ENCODE measurements at regions of chr17 and their contacts with region 1.

Region 1: DNA sequence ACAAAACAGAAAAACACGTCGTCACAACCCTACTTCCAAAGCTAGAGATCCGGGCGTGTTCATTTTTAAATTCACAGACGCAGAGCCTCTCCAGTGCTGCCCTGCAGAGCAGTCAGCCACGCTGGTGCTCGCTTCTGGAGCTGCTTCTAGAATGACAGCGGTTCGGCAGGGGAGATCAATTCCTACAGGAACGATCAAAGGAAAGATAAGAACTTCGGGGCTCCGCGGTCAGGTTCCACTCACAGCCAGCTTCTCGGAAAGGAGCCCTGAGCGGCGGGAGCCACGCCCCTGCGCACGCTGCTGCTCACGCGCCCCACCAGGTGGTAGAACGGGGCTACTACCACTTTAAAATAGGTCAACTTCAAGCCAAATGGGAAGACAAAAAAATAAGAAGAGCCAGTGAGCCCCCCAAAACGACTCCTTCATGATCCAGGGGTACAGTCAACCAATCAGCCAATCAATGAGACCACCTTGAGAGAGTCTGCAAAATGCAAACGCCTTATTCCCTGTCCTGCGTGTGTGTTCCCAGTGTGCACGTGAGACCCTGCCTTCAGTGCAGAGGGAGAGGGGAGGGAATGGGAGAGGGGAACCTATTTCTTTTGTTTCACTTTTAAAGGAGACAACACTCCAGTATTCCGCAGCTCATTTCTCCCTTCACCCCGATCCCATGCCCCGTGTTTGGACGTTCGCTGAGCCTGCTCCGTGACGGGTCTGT is 209.7 kb downstream of the RBFOX3 start:
- DNase-seq: peak; percentile 47 to 90
- H3K4me3 ChIP-seq: peak overlapping the region; percentile 32 to 59 (median 46); a peak in 7 of 8 replicates
- H3K27ac ChIP-seq: no peak overlapping the region
- H3K4me1 ChIP-seq: peaks cover 0 to 8% (median 5%) of the 10 kb centered on the region in 4 experiments; a peak in 6 of 7 replicates
- H3K27me3 ChIP-seq: peaks cover 0 to 24% (median 15%) of the 10 kb centered on the region in 4 experiments; a peak in 6 of 7 replicates
- CTCF ChIP-seq: peak; percentile 68 to 80 (median 70)
- EP300 ChIP-seq: no peak
- POLR2A ChIP-seq: no peak
- RAD21 ChIP-seq: peak; percentile 55 to 58

Region 2: GRCh38 chr17:79188048-79188447 is 213.1 kb before region 1 on chr17:
- CTCF ChIA-PET with region 1: interaction called, 272 read pairs
- POLR2A ChIA-PET with region 1: no interaction called
- DNase-seq: peak; percentile 38 to 89
- H3K4me3 ChIP-seq: no peak overlapping the region
- H3K27ac ChIP-seq: no peak overlapping the region
- H3K4me1 ChIP-seq: peaks cover 10 to 40% (median 26%) of the 10 kb centered on the region in 4 experiments
- H3K27me3 ChIP-seq: peaks cover 3 to 24% (median 17%) of the 10 kb centered on the region in 4 experiments
- CTCF ChIP-seq: peak; percentile 91 to 97 (median 95)
- EP300 ChIP-seq: no peak
- POLR2A ChIP-seq: no peak
- RAD21 ChIP-seq: peak; percentile 97

Region 3: DNA sequence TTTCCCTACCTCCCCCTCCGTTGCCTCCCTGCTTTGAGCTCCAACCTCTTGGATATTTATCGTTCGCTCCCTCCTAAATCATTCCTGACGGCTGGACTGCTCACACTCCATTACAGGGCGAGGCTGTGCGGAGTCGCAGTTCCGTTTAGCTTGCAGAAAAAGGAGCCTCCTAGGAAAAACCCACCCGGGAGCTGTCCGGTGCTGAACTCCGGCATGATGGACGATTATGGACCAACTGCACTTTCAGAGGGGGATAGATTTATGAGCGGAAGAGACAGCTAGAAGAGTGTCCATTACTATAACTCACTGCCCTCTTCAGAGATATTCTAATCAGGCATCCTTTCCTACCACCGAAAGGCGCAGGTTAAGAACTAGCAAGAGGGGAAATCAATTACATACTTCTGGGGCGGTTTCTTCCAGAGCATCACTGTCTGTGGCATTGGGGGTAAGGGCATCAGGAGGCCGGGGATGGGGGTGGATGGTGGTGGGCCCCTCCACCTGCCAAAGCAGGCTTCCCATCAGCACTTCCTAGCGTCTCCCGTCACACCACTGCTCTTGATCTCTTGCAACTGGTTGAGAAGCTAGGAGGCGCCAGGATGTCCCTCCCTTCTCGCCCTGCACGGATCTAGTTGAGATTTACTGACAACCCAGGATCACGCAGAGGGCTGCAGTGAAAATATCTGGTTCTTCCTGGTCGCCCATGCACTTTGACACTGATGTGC is 75.3 kb before region 1 on chr17:
- CTCF ChIA-PET with region 1: no interaction called
- POLR2A ChIA-PET with region 1: no interaction called
- DNase-seq: peak in 1 of 2 experiments; percentile 79
- H3K4me3 ChIP-seq: no peak overlapping the region
- H3K27ac ChIP-seq: no peak overlapping the region
- H3K4me1 ChIP-seq: no peaks in the 10 kb centered on the region
- H3K27me3 ChIP-seq: peaks cover 0 to 2% (median under 1%) of the 10 kb centered on the region in 4 experiments; a peak in 1 of 7 replicates
- CTCF ChIP-seq: no peak
- EP300 ChIP-seq: no peak
- POLR2A ChIP-seq: no peak
- RAD21 ChIP-seq: no peak

Region 4: GRCh38 chr17:79413611-79414010 is 12.5 kb after region 1 on chr17:
- CTCF ChIA-PET with region 1: interaction called, 14 read pairs
- POLR2A ChIA-PET with region 1: interaction called, 3 read pairs
- DNase-seq: no peak
- H3K4me3 ChIP-seq: no peak overlapping the region
- H3K27ac ChIP-seq: no peak overlapping the region
- H3K4me1 ChIP-seq: peaks cover 0 to 9% (median 3%) of the 10 kb centered on the region in 4 experiments; a peak in 4 of 7 replicates
- H3K27me3 ChIP-seq: no peaks in the 10 kb centered on the region
- CTCF ChIP-seq: no peak
- EP300 ChIP-seq: no peak
- POLR2A ChIP-seq: no peak
- RAD21 ChIP-seq: no peak

Region 5: GRCh38 chr17:79612468-79613194 is 211.5 kb after region 1 on chr17:
- CTCF ChIA-PET with region 1: interaction called, 17 read pairs
- POLR2A ChIA-PET with region 1: no interaction called
- DNase-seq: peak; percentile 78 to 97
- H3K4me3 ChIP-seq: no peak overlapping the region
- H3K27ac ChIP-seq: no peak overlapping the region
- H3K4me1 ChIP-seq: peaks cover 0 to 17% (median 11%) of the 10 kb centered on the region in 4 experiments; a peak in 6 of 7 replicates
- H3K27me3 ChIP-seq: peaks cover 40 to 51% (median 48%) of the 10 kb centered on the region in 4 experiments
- CTCF ChIP-seq: peak; percentile 93 to 97 (median 97)
- EP300 ChIP-seq: no peak
- POLR2A ChIP-seq: no peak
- RAD21 ChIP-seq: peak; percentile 91

Region 6: GRCh38 chr17:79707931-79708891 is 307.1 kb after region 1 on chr17:
- CTCF ChIA-PET with region 1: interaction called, 37 read pairs
- POLR2A ChIA-PET with region 1: no interaction called
- DNase-seq: peak in 1 of 2 experiments; percentile 92
- H3K4me3 ChIP-seq: peak overlapping the region in 2 of 4 experiments; percentile 2 to 48; a peak in 2 of 8 replicates
- H3K27ac ChIP-seq: no peak overlapping the region
- H3K4me1 ChIP-seq: peaks cover 0 to 13% (median 3%) of the 10 kb centered on the region in 4 experiments; a peak in 5 of 7 replicates
- H3K27me3 ChIP-seq: no peaks in the 10 kb centered on the region
- CTCF ChIP-seq: peak; percentile 70 to 75 (median 73)
- EP300 ChIP-seq: no peak
- POLR2A ChIP-seq: no peak
- RAD21 ChIP-seq: peak; percentile 89 to 90